A673 (cell line): ENCODE measurements at regions of chr7 and their contacts with region 1.

Region 1: GRCh38 chr7:78472519-78472918 is 673.9 kb downstream of the PHTF2 start:
- DNase-seq: no peak
- H3K4me3 ChIP-seq: no peak overlapping the region
- H3K27ac ChIP-seq: no peak overlapping the region
- H3K4me1 ChIP-seq: no peaks in the 10 kb centered on the region
- H3K27me3 ChIP-seq: peaks cover 28% of the 10 kb centered on the region
- CTCF ChIP-seq: no peak

Region 2: DNA sequence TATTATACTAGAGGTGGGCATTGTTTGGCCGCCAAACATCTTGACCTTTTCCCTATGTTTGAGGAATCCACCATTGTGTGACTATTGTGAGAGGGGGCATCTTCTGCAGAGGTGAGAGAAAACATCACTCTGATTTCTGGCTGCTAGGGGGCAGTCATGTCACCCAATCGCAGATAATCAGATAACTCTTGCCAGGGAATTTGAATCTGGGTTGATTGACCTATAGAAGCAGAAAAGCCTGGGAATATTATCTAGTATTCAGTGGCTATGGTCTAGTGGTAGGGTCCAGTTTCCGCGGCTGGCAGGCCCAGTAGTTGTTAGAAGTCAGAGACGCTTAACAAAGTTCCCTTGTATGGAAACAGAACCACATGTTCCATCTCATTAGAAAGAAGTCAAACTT is 134.6 kb after region 1 on chr7:
- CTCF ChIA-PET with region 1: no interaction called
- POLR2A ChIA-PET with region 1: no interaction called
- intact Hi-C with region 1: no loop called
- DNase-seq: peak; percentile 32
- H3K4me3 ChIP-seq: no peak overlapping the region
- H3K27ac ChIP-seq: no peak overlapping the region
- H3K4me1 ChIP-seq: no peaks in the 10 kb centered on the region
- H3K27me3 ChIP-seq: no peaks in the 10 kb centered on the region
- CTCF ChIP-seq: peak; percentile 62

Region 3: DNA sequence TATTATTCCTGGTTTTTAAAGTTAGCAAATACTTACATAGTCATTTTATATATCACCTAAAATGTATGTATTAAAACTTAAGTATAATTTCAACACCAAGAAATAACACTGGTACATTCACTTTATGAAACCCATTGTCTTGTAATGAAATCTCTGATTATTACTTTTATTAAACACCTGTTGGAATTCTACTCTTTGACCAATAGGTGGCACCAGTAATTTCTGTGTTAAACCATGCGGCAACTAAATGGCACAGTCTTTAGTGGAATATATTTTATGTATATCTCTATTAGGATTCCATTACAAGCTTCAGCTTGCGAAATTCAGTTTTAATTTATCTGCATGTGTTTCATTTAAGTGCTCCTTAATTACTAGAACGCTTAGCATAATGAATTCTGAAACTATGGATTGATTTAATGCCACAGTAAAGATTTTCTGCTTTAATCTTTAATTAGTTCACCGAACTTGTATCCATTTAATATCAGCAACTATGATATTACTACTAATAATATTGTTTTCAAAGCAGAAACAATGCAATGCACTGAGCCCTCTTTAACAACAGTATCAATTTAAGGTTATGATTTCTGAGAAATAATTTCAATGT is 799.6 kb after region 1 on chr7:
- CTCF ChIA-PET with region 1: no interaction called
- POLR2A ChIA-PET with region 1: interaction called, 14 read pairs
- intact Hi-C with region 1: no loop called
- DNase-seq: peak; percentile 66
- H3K4me3 ChIP-seq: no peak overlapping the region
- H3K27ac ChIP-seq: no peak overlapping the region
- H3K4me1 ChIP-seq: no peaks in the 10 kb centered on the region
- H3K27me3 ChIP-seq: peaks cover 18% of the 10 kb centered on the region
- CTCF ChIP-seq: peak; percentile 72